ENCODE measurements at regions of chr1 and their contacts with region 1.

Region 1: GRCh38 chr1:40338745-40339424 is 21.8 kb upstream of the COL9A2 start:
- DNase-seq: peak; percentile 90

Region 2: GRCh38 chr1:40079774-40080400 is 259.0 kb before region 1 on chr1:
- intact Hi-C with region 1: loop called (anchors 2 kb)
- DNase-seq: no peak

Region 3: DNA sequence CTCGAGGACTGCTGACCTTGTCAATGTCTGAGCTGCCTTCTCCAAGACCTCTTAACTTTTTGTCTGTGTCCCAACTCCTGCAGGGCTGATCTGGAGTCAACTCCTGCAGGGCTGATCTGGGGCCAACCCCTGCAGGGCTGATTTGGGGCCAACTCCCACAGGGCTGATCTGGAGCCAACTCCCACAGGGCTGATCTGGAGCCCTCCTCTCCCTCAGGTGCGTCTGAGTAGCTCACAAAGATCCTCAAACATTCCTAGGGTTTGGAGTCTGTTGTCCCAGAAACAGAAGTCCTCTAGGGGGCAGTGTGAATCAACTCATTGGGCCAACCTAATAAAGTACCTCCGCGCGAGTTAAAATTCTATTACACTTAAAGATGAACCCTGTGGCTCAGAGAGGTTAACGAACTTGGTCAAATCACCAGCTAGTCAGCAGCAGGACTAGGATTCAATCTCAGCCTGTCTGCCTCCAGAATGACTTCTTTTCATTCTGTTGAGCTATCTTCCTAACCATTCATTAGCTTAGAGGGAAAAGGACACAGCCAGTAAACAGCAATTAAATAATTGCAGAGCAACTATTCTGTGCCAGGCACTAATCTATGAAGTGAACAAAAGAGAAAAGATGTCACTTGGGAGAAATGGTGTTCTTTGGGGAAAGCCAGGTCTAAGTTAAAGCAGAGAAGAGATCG is 194.9 kb before region 1 on chr1:
- intact Hi-C with region 1: loop called (anchors 2 kb)
- DNase-seq: no peak

Region 4: GRCh38 chr1:40161125-40161887 is 177.6 kb before region 1 on chr1 and contains the start of gene RLF:
- intact Hi-C with region 1: no loop called
- DNase-seq: peak; percentile 98
- total RNA-seq, gene RLF: 13.8 TPM

Region 5: GRCh38 chr1:40363721-40364120 is 24.8 kb after region 1 on chr1:
- intact Hi-C with region 1: no loop called
- DNase-seq: no peak

Region 6: GRCh38 chr1:40404670-40405462 is 66.0 kb after region 1 on chr1:
- intact Hi-C with region 1: loop called (anchors 10 kb)
- DNase-seq: no peak

Region 7: GRCh38 chr1:40691538-40692428 is 352.9 kb after region 1 on chr1 and contains the start of gene NFYC:
- intact Hi-C with region 1: no loop called
- DNase-seq: peak; percentile 98
- total RNA-seq, gene NFYC: 61.7 TPM

Measured in cardiac septum (tissue), 1 donor.